PC-3 (cell line): ENCODE measurements at regions of chr7 and their contacts with region 1.

Region 1: DNA sequence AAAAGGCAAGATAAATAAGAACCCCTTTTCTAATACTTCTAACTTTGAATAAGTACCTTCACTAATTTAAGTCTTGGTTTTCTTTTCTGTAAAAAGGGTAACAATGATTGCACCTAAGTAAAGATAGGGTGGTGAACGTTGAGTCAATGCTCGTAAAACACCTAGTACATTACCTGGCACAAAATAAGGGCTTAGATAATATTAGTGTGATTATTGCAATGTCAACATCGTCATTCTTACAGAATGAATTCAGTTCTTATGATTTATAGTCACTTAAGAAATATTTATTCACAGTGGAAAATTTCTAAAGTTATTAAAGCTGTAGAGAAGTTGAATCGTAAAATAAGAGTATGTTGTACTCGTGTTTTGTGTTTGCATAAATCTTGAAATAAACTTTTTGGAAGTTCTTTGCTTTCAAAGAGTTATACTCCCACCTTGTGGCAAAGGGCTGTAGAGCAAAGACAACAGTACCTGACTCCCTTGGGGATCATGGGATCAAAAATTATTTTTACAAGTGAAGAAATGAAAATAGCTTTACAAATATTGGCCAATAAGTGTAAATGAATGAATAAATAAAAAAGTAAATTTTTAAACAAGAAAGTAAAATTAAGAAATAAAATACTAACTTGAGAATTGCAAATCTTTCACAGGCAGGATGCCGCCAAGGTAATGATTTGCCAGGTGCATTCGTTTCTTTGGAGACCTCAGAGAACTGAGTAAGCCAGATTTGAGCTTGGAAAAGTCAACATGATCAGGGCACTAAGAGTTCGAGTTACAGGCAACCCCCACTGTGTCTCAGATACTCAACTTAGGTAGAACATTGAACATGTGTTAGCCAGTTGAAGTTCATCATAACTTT is 285.8 kb upstream of the CACNA2D1 start:
- DNase-seq: peak; percentile 76
- ATAC-seq: peak; percentile 69
- H3K4me3 ChIP-seq: no peak overlapping the region
- H3K27ac ChIP-seq: no peak overlapping the region
- H3K4me1 ChIP-seq: peaks cover 6% of the 10 kb centered on the region
- H3K27me3 ChIP-seq: no peaks in the 10 kb centered on the region
- CTCF ChIP-seq: peak; percentile 88

Region 2: DNA sequence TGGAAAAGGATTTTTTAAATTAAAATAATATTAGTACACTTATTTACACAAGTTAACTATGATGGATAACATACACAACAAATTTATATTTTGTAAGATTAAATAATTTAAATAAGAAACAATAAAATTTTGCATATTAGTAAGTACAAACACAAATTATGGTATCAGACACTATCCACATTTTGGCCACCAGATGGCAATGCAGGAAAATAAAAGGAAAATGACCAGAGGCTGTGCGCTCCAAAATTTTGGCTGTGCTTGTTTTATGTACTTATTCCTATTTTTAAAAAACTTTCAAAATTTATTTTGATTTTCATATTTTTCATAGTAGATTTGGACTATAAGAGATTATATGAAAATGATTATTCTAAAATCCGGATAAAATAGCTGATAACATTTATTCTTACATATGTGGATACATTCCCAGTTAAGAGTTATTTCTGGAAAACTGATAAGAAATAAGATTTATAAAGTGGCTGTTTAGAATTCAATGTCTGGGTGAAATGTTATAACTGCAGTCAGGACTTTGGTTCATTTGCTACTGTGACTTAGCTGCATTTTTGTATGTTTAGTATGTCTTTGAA is 684.8 kb before region 1 on chr7:
- CTCF ChIA-PET with region 1: no interaction called
- POLR2A ChIA-PET with region 1: no interaction called
- intact Hi-C with region 1: loop called (anchors 1 kb)
- DNase-seq: peak; percentile 66
- ATAC-seq: peak; percentile 45; the same call in 1 of the 2 replicates
- H3K4me3 ChIP-seq: no peak overlapping the region
- H3K27ac ChIP-seq: no peak overlapping the region
- H3K4me1 ChIP-seq: peaks cover 10% of the 10 kb centered on the region
- H3K27me3 ChIP-seq: no peaks in the 10 kb centered on the region
- CTCF ChIP-seq: peak; percentile 62

Region 3: DNA sequence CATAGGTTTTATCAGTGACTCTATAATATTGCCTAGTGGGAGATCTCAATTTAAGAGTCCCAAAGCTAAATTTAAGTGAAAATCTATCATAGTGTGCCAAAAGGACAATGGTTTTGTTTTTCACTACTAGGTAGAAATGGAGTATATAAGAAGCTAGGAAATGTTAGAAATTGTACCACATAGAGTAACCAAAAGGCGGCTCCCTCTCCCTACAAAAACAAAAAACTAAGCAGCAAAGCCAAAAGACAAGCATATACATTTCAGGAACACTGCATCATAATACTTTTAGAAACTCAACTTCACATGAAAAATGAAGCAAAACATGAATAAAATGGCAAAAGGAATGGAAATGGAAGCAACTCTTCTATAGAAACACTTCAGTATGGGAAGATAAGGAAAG is 557.4 kb before region 1 on chr7:
- CTCF ChIA-PET with region 1: no interaction called
- POLR2A ChIA-PET with region 1: no interaction called
- intact Hi-C with region 1: loop called (anchors 2 kb)
- DNase-seq: peak; percentile 32
- ATAC-seq: peak; percentile 70
- H3K4me3 ChIP-seq: no peak overlapping the region
- H3K27ac ChIP-seq: no peak overlapping the region
- H3K4me1 ChIP-seq: no peaks in the 10 kb centered on the region
- H3K27me3 ChIP-seq: peaks cover 65% of the 10 kb centered on the region
- CTCF ChIP-seq: peak; percentile 63

Region 4: DNA sequence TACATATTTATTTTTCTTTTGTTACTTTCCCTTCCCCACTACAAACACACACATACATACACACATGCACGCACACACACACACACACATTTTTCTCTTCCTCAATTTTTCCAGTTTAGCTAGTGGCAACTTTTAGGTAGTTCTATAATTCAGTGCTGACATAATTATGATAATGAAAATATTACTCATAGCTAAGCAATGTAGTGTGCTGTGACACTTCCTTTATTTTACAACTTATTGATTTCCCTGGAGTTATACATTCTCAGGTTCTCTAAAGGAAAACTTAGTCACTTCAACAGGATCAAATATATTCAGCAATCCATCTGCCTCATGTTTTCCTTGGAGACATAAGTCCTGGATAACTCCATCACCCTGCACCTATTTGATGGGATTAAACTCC is 437.5 kb before region 1 on chr7:
- CTCF ChIA-PET with region 1: no interaction called
- POLR2A ChIA-PET with region 1: no interaction called
- intact Hi-C with region 1: loop called (anchors 5 kb)
- DNase-seq: peak; percentile 45
- ATAC-seq: peak; percentile 86
- H3K4me3 ChIP-seq: no peak overlapping the region
- H3K27ac ChIP-seq: peak overlapping the region; percentile 45
- H3K4me1 ChIP-seq: no peaks in the 10 kb centered on the region
- H3K27me3 ChIP-seq: no peaks in the 10 kb centered on the region
- CTCF ChIP-seq: no peak

Region 5: GRCh38 chr7:82572195-82572880 is 157.1 kb before region 1 on chr7:
- CTCF ChIA-PET with region 1: interaction called, 3 read pairs
- POLR2A ChIA-PET with region 1: no interaction called
- intact Hi-C with region 1: loop called (anchors 1 kb)
- DNase-seq: peak; percentile 86
- ATAC-seq: peak; percentile 91
- H3K4me3 ChIP-seq: no peak overlapping the region; the same call in 1 of the 2 replicates
- H3K27ac ChIP-seq: no peak overlapping the region
- H3K4me1 ChIP-seq: no peaks in the 10 kb centered on the region
- H3K27me3 ChIP-seq: peaks cover 25% of the 10 kb centered on the region
- CTCF ChIP-seq: peak; percentile 90

Region 6: DNA sequence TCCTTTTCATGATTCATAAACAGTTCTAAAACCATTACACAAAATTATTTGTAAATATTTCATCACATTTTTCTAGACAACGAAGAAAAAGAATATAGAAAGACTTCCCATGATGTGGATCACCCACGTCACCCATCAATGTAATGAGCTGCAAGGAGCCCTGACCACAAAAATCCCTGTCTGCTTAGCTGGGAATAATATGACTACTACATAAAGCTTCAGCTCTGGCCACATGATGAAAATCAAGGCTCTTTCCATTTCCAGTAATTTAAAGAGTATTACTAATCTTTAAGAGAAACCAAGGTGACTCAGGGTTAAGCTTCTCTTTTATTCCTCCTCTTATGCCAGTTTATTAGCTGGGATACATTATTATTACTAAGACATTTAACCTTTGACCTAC is 105.1 kb before region 1 on chr7:
- CTCF ChIA-PET with region 1: no interaction called
- POLR2A ChIA-PET with region 1: no interaction called
- intact Hi-C with region 1: loop called (anchors 1 kb)
- DNase-seq: peak; percentile 6
- ATAC-seq: peak; percentile 42
- H3K4me3 ChIP-seq: no peak overlapping the region
- H3K27ac ChIP-seq: no peak overlapping the region
- H3K4me1 ChIP-seq: no peaks in the 10 kb centered on the region
- H3K27me3 ChIP-seq: peaks cover 4% of the 10 kb centered on the region; the same call in 1 of the 2 replicates
- CTCF ChIP-seq: no peak